ENCODE measurements at regions of chr15 and their contacts with region 1.

Region 1: GRCh38 chr15:84929744-84930371 is 45.4 kb downstream of the SLC28A1 start:
- DNase-seq: peak in 1 of 2 donors; percentile 69
- ATAC-seq: no peak
- H3K4me3 ChIP-seq: no peak overlapping the region
- H3K27ac ChIP-seq: no peak overlapping the region
- H3K4me1 ChIP-seq: no peaks in the 10 kb centered on the region
- H3K27me3 ChIP-seq: no peaks in the 10 kb centered on the region

Region 2: GRCh38 chr15:84600851-84601838 is 328.7 kb before region 1 on chr15 and contains the start of gene ZSCAN2:
- intact Hi-C with region 1: loop called in 1 of 2 experiments (anchors 10 kb)
- DNase-seq: peak; percentile 98
- ATAC-seq: peak; percentile 98
- H3K4me3 ChIP-seq: peak within 1 kb of the TSS; percentile 79 to 91
- H3K27ac ChIP-seq: peak within 1 kb of the TSS in 1 of 2 donors; percentile 18
- H3K4me1 ChIP-seq: no peaks in the 10 kb centered on the region
- H3K27me3 ChIP-seq: no peaks in the 10 kb centered on the region
- total RNA-seq, gene ZSCAN2: 4.1 to 6.7 TPM

Region 3: GRCh38 chr15:84658080-84658787 is 271.6 kb before region 1 on chr15 and contains the start of gene NMB:
- intact Hi-C with region 1: loop called in 1 of 2 experiments (anchors 5 kb)
- DNase-seq: peak; percentile 84 to 93
- ATAC-seq: peak; percentile 84
- H3K4me3 ChIP-seq: peak within 1 kb of the TSS; percentile 58 to 63
- H3K27ac ChIP-seq: peak within 1 kb of the TSS in 1 of 2 donors; percentile 84
- H3K4me1 ChIP-seq: no peaks in the 10 kb centered on the region
- H3K27me3 ChIP-seq: no peaks in the 10 kb centered on the region
- total RNA-seq, gene NMB: 5.2 to 12.5 TPM

Region 4: GRCh38 chr15:84716036-84716799 is 213.6 kb before region 1 on chr15 and contains the start of gene SEC11A:
- intact Hi-C with region 1: loop called in 1 of 2 experiments (anchors 5 kb)
- DNase-seq: peak; percentile 97 to 98
- ATAC-seq: peak; percentile 99
- H3K4me3 ChIP-seq: peak within 1 kb of the TSS; percentile 62 to 71
- H3K27ac ChIP-seq: peak within 1 kb of the TSS; percentile 78 to 79
- H3K4me1 ChIP-seq: no peaks in the 10 kb centered on the region
- H3K27me3 ChIP-seq: no peaks in the 10 kb centered on the region
- total RNA-seq, gene SEC11A: 99.3 to 115 TPM

Region 5: GRCh38 chr15:84748274-84749110 is 181.4 kb before region 1 on chr15 and contains the start of gene ZNF592:
- intact Hi-C with region 1: loop called in 1 of 2 experiments (anchors 5 kb)
- DNase-seq: peak; percentile 91 to 95
- ATAC-seq: peak; percentile 85
- H3K4me3 ChIP-seq: peak within 1 kb of the TSS; percentile 86 to 87
- H3K27ac ChIP-seq: peak within 1 kb of the TSS; percentile 85 to 96
- H3K4me1 ChIP-seq: no peaks in the 10 kb centered on the region
- H3K27me3 ChIP-seq: no peaks in the 10 kb centered on the region
- total RNA-seq, gene ZNF592: 27.8 to 35.8 TPM

Region 6: DNA sequence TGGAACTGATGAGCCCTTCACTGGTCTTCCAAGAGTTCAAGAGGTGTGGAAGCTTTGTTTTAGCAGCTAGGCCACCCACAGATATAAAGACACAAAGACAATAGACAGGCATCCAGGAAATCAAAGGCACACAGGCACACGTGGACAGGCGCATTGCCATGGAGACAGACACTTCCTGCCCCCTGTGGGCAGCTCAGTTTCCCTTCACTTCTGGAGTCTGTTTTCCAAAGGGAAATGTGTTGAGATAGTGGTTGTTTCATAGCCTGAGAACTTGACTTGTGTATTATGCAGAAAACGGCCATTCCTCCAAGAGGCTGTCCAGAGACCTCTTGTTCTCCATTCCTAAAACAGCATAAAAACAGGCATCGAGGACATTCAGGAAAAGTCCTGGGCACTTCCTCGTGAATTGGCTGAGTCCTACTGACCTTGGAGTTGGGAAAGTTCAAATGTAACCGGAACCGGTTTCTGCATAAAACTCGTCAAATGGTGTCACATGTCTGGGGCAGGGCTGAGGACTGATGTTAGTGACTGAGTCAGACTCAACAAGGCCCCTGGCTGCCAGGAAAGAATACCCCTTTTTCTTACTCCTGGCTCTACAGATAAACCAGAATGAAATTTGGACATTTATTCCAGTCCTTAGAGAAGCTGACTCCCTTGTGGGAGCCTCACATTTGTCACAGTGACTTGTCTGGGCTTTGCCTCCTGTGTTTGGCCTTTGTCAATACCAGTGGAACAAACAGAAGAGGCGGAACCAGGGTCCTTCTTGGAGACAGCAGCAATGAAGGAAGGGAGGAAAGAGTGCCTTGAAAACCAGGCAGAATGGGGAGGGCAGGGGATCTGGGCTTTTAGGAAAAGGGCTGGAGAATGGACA is 111.4 kb before region 1 on chr15:
- intact Hi-C with region 1: loop called in 1 of 2 experiments (anchors 2 kb)
- DNase-seq: no peak
- ATAC-seq: peak; percentile 43
- H3K4me3 ChIP-seq: peak overlapping the region; percentile 24 to 57
- H3K27ac ChIP-seq: peak overlapping the region; percentile 96 to 98
- H3K4me1 ChIP-seq: peaks cover 2% of the 10 kb centered on the region in 2 donors
- H3K27me3 ChIP-seq: no peaks in the 10 kb centered on the region

Region 7: GRCh38 chr15:84863565-84864443 is 66.1 kb before region 1 on chr15:
- intact Hi-C with region 1: loop called (anchors 1 to 5 kb)
- DNase-seq: no peak
- ATAC-seq: peak; percentile 68
- H3K4me3 ChIP-seq: no peak overlapping the region
- H3K27ac ChIP-seq: peak overlapping the region in 1 of 2 donors; percentile 61
- H3K4me1 ChIP-seq: peaks cover 1 to 2% of the 10 kb centered on the region in 2 donors
- H3K27me3 ChIP-seq: no peaks in the 10 kb centered on the region

Region 8: GRCh38 chr15:85010386-85011159 is 80.7 kb after region 1 on chr15:
- intact Hi-C with region 1: no loop called
- DNase-seq: no peak
- ATAC-seq: peak; percentile 73
- H3K4me3 ChIP-seq: no peak overlapping the region
- H3K27ac ChIP-seq: peak overlapping the region; percentile 73 to 87
- H3K4me1 ChIP-seq: no peaks in the 10 kb centered on the region
- H3K27me3 ChIP-seq: no peaks in the 10 kb centered on the region

Measured in aorta (tissue), 5 donors.